Activated CD8-positive, alpha-beta memory T cell treated with anti-CD3 and anti-CD28 coated beads, Interleukin-2, amount 10 ng/mL, durations not matched to agents 7 days and 5 days (primary cell): ENCODE measurements at regions of chr20 and their contacts with region 1.

Region 1: DNA sequence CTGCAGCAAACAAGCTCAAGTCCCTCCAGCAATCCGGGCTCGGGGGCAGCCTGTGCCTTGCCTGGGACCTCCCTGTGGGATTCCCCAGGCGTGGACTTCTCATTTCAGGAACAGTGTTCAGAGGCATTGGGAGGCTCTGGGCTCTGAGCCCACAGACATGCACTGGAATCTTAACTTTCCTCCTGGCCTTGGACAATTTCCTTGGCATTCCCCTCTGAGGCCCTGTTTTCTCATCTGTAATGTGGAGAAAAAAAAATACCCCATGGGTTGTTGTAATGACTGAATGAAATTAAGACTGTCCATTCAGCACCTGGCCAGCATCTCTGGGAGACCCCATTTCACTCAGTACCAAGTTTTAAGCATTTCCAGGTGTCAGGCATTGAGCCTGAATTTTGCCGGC is 17.6 kb downstream of the BPIFB4 start:
- DNase-seq: no peak
- ATAC-seq: no peak
- H3K4me3 Mint-ChIP-seq: no peak overlapping the region
- H3K27ac Mint-ChIP-seq: no peak overlapping the region
- H3K4me1 Mint-ChIP-seq: no peaks in the 10 kb centered on the region
- H3K27me3 Mint-ChIP-seq: no peaks in the 10 kb centered on the region

Region 2: DNA sequence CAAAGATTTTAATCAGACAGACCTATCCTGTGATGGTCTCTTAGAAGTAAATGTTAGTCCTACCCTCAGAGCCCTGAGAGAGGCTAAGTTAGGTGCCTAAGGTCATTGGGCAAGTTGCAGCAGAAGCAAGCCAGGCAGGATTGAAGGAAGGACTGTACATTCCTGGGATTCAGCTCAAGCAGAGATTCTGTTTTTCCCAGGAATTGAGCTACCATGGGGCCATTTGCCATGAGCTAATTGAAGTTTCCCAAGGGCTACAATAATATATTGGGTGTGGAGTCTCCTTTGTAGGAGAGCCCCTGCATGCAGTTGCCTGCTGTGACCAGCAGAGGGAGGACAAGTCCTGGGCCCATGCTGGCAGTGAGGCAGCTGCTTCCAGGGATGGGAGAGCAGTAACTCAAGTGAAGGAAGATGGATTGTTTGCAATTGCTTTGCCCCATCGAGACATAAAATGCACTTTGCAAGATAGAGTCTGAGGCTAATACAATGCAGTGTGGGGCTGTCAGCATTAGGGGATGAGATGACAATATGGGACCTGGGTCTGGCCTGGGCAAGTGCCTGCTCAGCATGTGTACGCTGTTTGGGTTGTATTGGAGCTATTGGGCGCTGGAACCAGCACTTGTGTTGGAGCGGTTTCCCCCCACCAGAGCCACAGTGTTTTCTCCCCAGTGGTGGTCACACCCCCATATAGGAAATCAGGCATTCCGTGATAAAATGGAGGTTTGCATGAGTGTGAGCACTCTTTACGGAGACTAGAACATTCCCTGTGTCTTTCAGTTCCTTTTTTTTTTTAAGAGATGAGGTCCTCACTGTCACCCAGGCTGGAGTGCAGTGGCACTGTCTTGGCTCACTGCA is 306.9 kb before region 1 on chr20:
- CTCF ChIA-PET with region 1: interaction called, 26 read pairs
- DNase-seq: peak; percentile 76
- ATAC-seq: peak; percentile 93
- H3K4me3 Mint-ChIP-seq: no peak overlapping the region
- H3K27ac Mint-ChIP-seq: no peak overlapping the region
- H3K4me1 Mint-ChIP-seq: peaks cover 20% of the 10 kb centered on the region
- H3K27me3 Mint-ChIP-seq: no peaks in the 10 kb centered on the region

Region 3: DNA sequence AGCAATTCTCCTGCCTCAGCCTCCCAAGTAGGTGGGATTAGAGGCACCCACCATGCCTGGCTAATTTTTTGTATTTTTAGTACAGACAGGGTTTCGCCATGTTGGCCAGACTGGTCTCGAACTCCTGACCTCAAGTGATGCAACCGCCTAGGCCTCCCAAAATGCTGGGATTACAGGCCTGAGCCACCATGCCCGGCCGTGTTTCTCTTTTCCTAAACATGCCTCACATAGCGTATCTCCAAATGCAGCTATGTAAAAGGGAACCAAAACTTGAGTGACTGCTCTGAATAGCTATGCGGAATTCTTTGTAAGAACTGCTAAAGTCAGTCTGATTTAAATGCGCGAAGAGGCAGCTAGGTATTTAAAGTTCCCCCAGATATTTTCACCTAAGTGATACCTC is 91.4 kb after region 1 on chr20:
- CTCF ChIA-PET with region 1: no interaction called
- DNase-seq: no peak
- ATAC-seq: no peak
- H3K4me3 Mint-ChIP-seq: no peak overlapping the region
- H3K27ac Mint-ChIP-seq: no peak overlapping the region
- H3K4me1 Mint-ChIP-seq: no peaks in the 10 kb centered on the region
- H3K27me3 Mint-ChIP-seq: peaks cover 6% of the 10 kb centered on the region

Region 4: DNA sequence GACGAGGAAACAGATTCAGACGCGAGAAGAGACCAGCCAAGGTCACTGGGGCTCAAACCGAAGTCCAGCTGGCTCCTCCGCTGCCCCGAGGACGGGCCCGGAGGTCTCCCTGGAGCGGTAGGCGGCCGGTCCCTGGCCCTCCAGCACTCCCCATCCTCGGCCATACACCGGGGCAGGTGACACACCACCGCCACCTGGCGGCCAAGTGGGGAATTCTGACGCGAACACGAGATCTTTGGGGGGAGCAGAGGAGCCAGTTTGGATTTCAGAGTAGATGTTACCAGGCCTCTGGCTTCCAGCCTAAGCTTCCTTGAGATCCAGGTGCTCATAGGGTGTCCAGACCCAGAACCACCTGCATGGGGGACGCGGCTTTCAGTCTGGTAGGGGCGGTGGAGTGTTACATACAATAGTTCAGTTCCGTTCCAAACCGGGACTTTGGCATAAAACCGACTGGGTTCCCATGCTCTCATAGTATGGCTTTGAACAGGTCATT is 202.2 kb after region 1 on chr20:
- CTCF ChIA-PET with region 1: interaction called, 13 read pairs
- DNase-seq: peak; percentile 77
- ATAC-seq: peak; percentile 87
- H3K4me3 Mint-ChIP-seq: no peak overlapping the region
- H3K27ac Mint-ChIP-seq: no peak overlapping the region
- H3K4me1 Mint-ChIP-seq: peaks cover 5% of the 10 kb centered on the region
- H3K27me3 Mint-ChIP-seq: peaks cover 14% of the 10 kb centered on the region